Activated B cell treated with CpG ODN at 0.5 μM for 24 hours (primary cell): ENCODE measurements at regions of chr2 and their contacts with region 1.

Region 1: GRCh38 chr2:219543601-219544358 is at the starts of genes CHPF and TMEM198:
- DNase-seq: peak; percentile 81
- ATAC-seq: peak; percentile 84
- H3K4me3 Mint-ChIP-seq: peak within 1 kb of the TSS; percentile 78
- H3K27ac Mint-ChIP-seq: no peak within 1 kb of the TSS
- H3K4me1 Mint-ChIP-seq: peaks cover 22% of the 10 kb centered on the region
- H3K27me3 Mint-ChIP-seq: peaks cover 42% of the 10 kb centered on the region
- CTCF ChIP-seq: no peak
- total RNA-seq, gene CHPF: 4.1 and 4.7 TPM in 2 replicates
- total RNA-seq, gene TMEM198: 0.86 and 1.2 TPM in 2 replicates

Region 2: DNA sequence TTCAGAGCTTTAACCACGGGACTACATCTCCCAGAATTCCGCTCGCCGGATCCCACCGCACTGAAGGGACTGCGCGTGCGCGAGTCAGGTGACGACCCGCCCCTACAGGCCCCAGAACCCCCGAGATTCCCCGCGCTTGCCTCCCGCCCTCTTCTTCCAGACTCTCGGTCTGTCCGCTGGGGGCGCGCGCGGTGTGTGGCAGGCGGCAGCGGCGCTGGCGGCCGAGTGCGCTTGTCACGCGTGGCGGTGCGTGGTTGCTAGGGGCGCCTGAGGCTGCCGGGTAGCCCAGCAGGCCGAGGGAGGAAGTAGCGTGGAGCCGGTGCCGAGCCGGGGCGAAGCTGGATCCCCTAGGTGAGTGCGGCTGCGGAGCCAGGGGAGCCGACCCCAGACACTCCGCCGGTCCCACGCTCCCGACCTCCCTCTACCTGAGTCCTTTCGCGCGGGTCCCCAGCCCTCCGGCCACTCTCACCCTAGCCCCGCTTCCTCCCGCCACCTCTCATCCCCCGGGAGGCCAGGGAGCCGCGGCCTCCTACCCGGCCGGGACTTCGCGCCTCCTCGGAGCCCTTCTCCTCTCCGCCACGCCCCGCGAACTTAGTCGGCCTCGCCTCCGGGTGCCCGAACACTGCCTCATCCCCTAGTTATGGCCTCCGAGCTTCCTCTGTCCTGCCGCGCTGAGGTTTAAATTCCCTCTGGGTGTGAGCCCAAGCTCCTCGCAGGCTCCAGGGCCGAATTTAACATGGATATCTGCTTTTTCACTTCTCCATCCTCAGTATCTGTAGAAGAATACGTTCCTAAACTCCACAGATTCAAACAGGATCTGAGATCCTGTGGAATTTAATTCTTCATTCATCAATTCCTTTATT is 832.9 kb before region 1 on chr2 and contains the start of gene TTLL4:
- CTCF ChIA-PET with region 1: no interaction called
- POLR2A ChIA-PET with region 1: no interaction called
- intact Hi-C with region 1: loop called (anchors 5 kb)
- DNase-seq: peak; percentile 98
- ATAC-seq: peak; percentile 97
- H3K4me3 Mint-ChIP-seq: peak within 1 kb of the TSS; percentile 91
- H3K27ac Mint-ChIP-seq: peak within 1 kb of the TSS; percentile 86
- H3K4me1 Mint-ChIP-seq: peaks cover 26% of the 10 kb centered on the region
- H3K27me3 Mint-ChIP-seq: no peaks in the 10 kb centered on the region
- CTCF ChIP-seq: no peak
- total RNA-seq, gene TTLL4: 36.0 and 37.2 TPM in 2 replicates

Region 3: GRCh38 chr2:219484343-219485200 is 59.2 kb before region 1 on chr2:
- CTCF ChIA-PET with region 1: no interaction called
- POLR2A ChIA-PET with region 1: no interaction called
- intact Hi-C with region 1: no loop called
- DNase-seq: no peak
- ATAC-seq: no peak
- H3K4me3 Mint-ChIP-seq: peak overlapping the region; percentile 58
- H3K27ac Mint-ChIP-seq: no peak overlapping the region
- H3K4me1 Mint-ChIP-seq: peaks cover 8% of the 10 kb centered on the region
- H3K27me3 Mint-ChIP-seq: peaks cover 48% of the 10 kb centered on the region
- CTCF ChIP-seq: no peak

Region 4: GRCh38 chr2:219498280-219499057 is 45.3 kb before region 1 on chr2 and contains the start of gene GMPPA:
- CTCF ChIA-PET with region 1: interaction called, 7 read pairs
- POLR2A ChIA-PET with region 1: interaction called, 8 read pairs
- intact Hi-C with region 1: loop called (anchors 1 kb)
- DNase-seq: peak; percentile 86
- ATAC-seq: peak; percentile 94
- H3K4me3 Mint-ChIP-seq: peak within 1 kb of the TSS; percentile 98
- H3K27ac Mint-ChIP-seq: peak within 1 kb of the TSS; percentile 86
- H3K4me1 Mint-ChIP-seq: peaks cover 34% of the 10 kb centered on the region
- H3K27me3 Mint-ChIP-seq: peaks cover 28% of the 10 kb centered on the region
- CTCF ChIP-seq: no peak
- total RNA-seq, gene GMPPA: 32.9 and 33.0 TPM in 2 replicates

Region 5: DNA sequence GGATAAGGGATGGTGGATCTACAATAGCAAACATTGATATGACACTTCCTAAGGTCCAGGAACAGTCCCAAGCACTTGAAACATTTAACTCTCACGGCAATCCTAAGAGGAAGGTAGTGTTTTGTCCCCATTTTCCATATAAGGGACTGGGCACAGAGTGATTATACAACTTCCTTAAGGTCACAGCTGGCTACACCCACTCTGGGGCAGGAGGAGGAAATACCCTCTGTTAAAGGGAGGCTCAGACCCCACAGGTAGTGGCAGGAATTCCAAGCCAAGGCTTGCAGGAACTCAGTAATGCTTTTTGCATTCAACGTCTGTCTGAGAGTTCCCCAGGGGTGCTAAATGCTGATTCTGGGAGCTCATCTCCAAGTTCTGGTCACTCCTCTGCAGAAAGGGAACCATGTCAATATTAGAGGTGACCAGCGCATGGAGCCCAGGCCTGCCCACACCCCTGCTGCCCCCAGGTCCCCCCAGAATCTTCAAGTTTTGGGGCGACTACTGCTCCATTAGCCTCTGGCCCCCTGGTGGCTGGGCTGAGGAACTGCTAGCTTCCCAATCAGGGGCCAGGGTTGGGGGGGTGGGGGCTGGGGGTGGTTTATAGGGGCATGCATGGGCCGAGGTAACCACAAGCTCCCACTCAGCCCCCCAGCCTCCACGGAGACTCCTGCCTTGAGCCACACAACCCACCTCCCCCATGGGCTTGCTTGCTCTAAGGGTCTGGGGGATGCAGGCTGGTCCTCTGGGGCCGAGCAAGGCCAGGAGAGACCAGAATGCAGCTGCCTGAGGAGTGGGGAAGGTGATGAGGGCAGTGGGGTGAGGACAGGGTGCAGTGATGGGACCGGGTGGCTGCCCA is 16.5 kb after region 1 on chr2:
- CTCF ChIA-PET with region 1: interaction called, 10 read pairs
- POLR2A ChIA-PET with region 1: no interaction called
- intact Hi-C with region 1: loop called (anchors 1 kb)
- DNase-seq: no peak
- ATAC-seq: peak; percentile 64
- H3K4me3 Mint-ChIP-seq: no peak overlapping the region
- H3K27ac Mint-ChIP-seq: no peak overlapping the region
- H3K4me1 Mint-ChIP-seq: no peaks in the 10 kb centered on the region
- H3K27me3 Mint-ChIP-seq: peaks cover 26% of the 10 kb centered on the region
- CTCF ChIP-seq: peak; percentile 72

Region 6: DNA sequence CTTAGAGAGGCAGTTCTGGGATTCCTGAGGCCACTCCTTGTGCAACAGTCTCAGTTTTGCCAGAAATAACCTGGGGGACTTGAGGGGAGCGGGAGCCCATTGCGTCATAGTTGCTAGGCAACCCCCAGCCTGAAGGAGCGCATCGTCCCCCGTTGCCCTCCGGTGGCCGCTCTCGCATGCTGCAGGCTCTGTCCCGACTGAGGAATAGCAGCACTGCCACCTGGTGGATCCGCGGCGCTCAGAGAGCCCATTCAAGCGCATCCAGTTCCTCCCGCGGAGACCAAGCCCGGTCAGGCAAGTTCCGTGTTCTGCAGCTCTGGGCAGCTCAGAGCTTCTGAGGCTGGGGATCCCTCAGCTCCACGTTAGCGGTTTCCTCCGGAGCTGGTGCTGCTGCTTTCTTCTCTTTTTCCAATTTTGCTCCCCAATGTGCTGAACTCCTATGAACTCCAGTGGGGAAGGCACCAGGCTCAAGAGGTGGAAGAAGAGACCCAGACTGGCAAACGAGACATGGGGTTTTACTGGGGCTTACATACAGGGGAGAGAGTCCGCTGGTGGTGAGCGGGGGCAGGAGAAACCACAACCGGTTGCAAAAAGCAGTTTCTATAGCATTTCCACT is 98.8 kb after region 1 on chr2:
- CTCF ChIA-PET with region 1: interaction called, 23 read pairs
- POLR2A ChIA-PET with region 1: no interaction called
- intact Hi-C with region 1: loop called (anchors 1 kb)
- DNase-seq: peak; percentile 80
- ATAC-seq: peak; percentile 100
- H3K4me3 Mint-ChIP-seq: peak overlapping the region; percentile 13
- H3K27ac Mint-ChIP-seq: peak overlapping the region; percentile 13
- H3K4me1 Mint-ChIP-seq: peaks cover 15% of the 10 kb centered on the region
- H3K27me3 Mint-ChIP-seq: peaks cover 20% of the 10 kb centered on the region
- CTCF ChIP-seq: peak; percentile 77

Region 7: GRCh38 chr2:219772095-219772635 is 228.4 kb after region 1 on chr2:
- CTCF ChIA-PET with region 1: no interaction called
- POLR2A ChIA-PET with region 1: no interaction called
- intact Hi-C with region 1: no loop called
- DNase-seq: no peak
- ATAC-seq: no peak
- H3K4me3 Mint-ChIP-seq: no peak overlapping the region
- H3K27ac Mint-ChIP-seq: no peak overlapping the region
- H3K4me1 Mint-ChIP-seq: no peaks in the 10 kb centered on the region
- H3K27me3 Mint-ChIP-seq: no peaks in the 10 kb centered on the region
- CTCF ChIP-seq: no peak

Region 8: DNA sequence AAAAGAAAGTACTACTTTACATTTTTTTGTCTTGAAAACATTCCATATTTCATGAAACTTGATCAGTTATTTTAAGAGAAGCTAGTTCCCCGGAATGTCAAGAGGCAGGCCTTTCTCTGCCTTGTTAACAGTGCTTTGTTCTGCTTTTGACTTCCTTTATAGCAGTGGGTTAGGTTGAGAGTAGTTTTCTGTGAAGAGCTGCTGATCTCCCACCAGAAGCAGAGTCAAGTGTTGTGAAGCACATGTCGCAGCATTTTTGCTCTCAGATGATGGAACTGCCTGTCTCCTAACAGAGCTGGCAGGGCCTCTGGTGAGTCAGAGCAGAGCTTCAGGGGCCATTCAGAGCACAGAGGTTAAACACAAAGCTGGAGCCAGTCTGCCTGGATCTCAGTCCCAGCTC is 955.4 kb after region 1 on chr2:
- CTCF ChIA-PET with region 1: no interaction called
- POLR2A ChIA-PET with region 1: no interaction called
- intact Hi-C with region 1: no loop called
- DNase-seq: no peak
- ATAC-seq: no peak
- H3K4me3 Mint-ChIP-seq: no peak overlapping the region
- H3K27ac Mint-ChIP-seq: no peak overlapping the region
- H3K4me1 Mint-ChIP-seq: no peaks in the 10 kb centered on the region
- H3K27me3 Mint-ChIP-seq: no peaks in the 10 kb centered on the region
- CTCF ChIP-seq: no peak